GM12878 (cell line): ENCODE measurements at regions of chrX and their contacts with region 1.

Region 1: GRCh38 chrX:121160987-121161386 is 113.6 kb downstream of the GLUD2 start:
- DNase-seq: peak; percentile 31
- ATAC-seq: peak; percentile 89
- H3K4me3 ChIP-seq: no peak overlapping the region; the same call in 1 of the 2 replicates
- H3K27ac ChIP-seq: peak overlapping the region; percentile 59; the same call in 1 of the 2 replicates
- H3K4me1 ChIP-seq: peaks cover 6% of the 10 kb centered on the region
- H3K27me3 ChIP-seq: no peaks in the 10 kb centered on the region
- CTCF ChIP-seq: no peak
- EP300 ChIP-seq: 0 out of 4 replicates have a peak, but pooled peaks of 1 of the 2 experiments have one; percentile 51
- POLR2A ChIP-seq: no peak
- RAD21 ChIP-seq: no peak

Region 2: GRCh38 chrX:120365320-120365719 is 795.7 kb before region 1 on chrX:
- CTCF ChIA-PET with region 1: no interaction called
- POLR2A ChIA-PET with region 1: no interaction called
- RAD21 ChIA-PET with region 1: no interaction called
- SMC1A ChIA-PET with region 1: no interaction called
- in situ Hi-C with region 1: no loop called
- intact Hi-C with region 1: no loop called
- DNase-seq: no peak
- ATAC-seq: peak; percentile 92
- H3K4me3 ChIP-seq: no peak overlapping the region
- H3K27ac ChIP-seq: no peak overlapping the region
- H3K4me1 ChIP-seq: no peaks in the 10 kb centered on the region
- H3K27me3 ChIP-seq: no peaks in the 10 kb centered on the region
- CTCF ChIP-seq: peak; percentile 42 to 63 (median 63); a peak in 5 of 6 replicates
- EP300 ChIP-seq: no peak
- POLR2A ChIP-seq: no peak
- RAD21 ChIP-seq: peak; percentile 50

Region 3: DNA sequence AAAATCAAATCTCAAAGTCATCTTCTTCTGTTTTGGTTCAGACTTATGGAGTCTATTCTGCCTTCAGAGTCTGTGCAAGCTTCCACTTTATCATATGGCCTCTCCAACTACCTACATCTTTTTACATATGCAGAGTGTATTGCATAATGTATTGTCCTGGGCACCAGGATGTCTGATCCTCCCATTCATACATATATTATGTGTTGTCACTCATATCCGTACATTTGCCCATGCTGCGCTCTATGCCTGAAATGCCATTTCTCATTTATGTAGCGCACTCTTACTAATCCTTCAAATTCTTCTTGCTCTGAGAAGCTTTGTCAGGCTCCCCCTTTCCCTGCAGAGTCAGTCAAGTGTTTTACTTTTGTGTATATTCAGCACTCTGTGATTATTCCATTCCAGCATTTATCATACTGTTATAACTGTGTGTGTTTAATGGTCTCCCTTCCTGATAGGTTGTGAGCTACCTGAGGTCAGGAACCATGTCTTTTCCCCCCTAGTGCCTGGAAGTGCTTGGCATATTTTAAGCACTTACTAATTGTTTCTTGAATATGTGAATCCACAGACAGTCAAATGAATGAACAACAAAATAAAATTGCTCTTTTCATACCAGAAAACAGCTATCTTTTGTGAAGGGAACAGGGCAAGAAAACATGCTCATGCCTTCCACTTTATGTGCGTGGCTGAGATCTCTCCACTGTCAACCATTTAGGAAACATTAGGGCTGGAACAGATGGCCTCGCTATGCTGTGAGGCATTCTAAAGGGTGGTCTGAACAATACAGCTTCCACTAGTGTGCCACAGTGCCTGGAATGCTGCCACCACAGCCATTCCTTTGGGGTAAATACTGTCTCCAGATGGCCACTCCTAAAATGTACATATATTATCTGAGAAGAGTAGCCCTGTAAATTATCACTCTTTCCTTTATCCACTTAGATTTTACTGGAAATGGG is 31.8 kb before region 1 on chrX:
- CTCF ChIA-PET with region 1: no interaction called
- POLR2A ChIA-PET with region 1: interaction called, 11 read pairs
- RAD21 ChIA-PET with region 1: no interaction called
- SMC1A ChIA-PET with region 1: no interaction called
- in situ Hi-C with region 1: no loop called
- intact Hi-C with region 1: no loop called
- DNase-seq: no peak
- ATAC-seq: no peak
- H3K4me3 ChIP-seq: no peak overlapping the region
- H3K27ac ChIP-seq: no peak overlapping the region
- H3K4me1 ChIP-seq: no peaks in the 10 kb centered on the region
- H3K27me3 ChIP-seq: no peaks in the 10 kb centered on the region
- CTCF ChIP-seq: no peak
- EP300 ChIP-seq: no peak
- POLR2A ChIP-seq: no peak
- RAD21 ChIP-seq: no peak